Mammary epithelial cell (primary cell): ENCODE measurements at regions of chr10 and their contacts with region 1.

Region 1: DNA sequence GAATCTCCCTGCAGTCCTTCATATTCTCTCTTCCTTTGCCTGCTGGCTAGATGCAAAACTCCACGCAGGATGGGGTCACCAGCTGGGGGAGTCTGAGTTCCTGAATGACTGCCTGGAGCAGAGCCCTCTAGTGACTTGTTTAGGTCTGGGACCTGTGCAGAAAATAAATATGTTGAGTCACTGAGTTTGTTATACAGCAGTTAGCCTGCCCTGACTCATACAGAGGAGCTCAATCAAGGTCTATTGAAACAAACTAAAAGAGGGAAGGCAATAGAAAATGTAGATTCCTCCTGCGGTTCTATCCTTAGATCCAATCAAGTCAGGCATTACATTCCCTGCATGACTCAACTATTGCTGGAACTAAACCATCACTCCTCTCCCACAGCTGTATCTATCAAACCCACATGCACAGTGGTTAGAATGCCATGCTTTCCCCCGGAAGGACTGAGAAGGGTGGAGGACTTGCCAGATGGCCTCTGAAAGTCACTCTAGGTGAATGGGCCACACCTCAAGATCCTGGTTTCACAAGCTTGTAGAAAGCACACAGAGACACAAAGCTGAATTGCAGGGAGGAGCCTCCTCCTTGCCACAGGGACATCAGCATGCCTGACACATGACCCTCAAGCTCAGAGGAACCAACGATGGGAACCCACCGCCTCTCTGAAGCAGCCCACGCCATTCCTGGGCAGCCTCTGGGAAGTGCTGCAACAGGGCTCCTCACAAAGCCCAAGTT is 73.9 kb downstream of the SH3PXD2A start:
- DNase-seq: peak; percentile 99
- H3K4me3 ChIP-seq: no peak overlapping the region
- H3K27ac ChIP-seq: peak overlapping the region; percentile 90
- H3K4me1 ChIP-seq: peaks cover 77% of the 10 kb centered on the region
- H3K27me3 ChIP-seq: no peaks in the 10 kb centered on the region
- CTCF ChIP-seq: peak; percentile 66 to 68

Region 2: DNA sequence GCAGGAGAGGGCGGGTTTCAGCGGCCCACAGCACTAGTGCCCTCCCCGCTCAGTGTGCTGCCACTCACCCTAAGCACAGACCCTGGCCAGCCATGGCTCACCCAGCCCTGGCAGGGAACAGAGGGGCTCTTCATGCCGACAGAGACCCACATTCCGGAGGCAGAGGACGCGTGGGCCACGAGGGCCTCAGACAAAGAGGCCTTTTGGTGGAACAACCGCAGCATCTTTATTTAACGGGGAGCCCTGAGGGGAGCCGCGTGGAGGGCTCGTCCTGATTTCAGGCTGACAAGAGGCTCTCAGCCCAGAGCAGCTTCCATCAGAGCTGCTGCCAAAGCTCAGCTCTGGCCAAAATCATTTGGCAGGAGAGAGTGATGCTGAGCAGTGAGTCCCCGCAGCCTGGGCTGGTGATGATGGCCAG is 53.9 kb before region 1 on chr10:
- CTCF ChIA-PET with region 1: no interaction called
- dilution Hi-C with region 1: no loop called
- in situ Hi-C with region 1: no loop called
- intact Hi-C with region 1: no loop called
- DNase-seq: no peak
- H3K4me3 ChIP-seq: no peak overlapping the region
- H3K27ac ChIP-seq: no peak overlapping the region
- H3K4me1 ChIP-seq: peaks cover 9% of the 10 kb centered on the region
- H3K27me3 ChIP-seq: no peaks in the 10 kb centered on the region
- CTCF ChIP-seq: no peak

Region 3: DNA sequence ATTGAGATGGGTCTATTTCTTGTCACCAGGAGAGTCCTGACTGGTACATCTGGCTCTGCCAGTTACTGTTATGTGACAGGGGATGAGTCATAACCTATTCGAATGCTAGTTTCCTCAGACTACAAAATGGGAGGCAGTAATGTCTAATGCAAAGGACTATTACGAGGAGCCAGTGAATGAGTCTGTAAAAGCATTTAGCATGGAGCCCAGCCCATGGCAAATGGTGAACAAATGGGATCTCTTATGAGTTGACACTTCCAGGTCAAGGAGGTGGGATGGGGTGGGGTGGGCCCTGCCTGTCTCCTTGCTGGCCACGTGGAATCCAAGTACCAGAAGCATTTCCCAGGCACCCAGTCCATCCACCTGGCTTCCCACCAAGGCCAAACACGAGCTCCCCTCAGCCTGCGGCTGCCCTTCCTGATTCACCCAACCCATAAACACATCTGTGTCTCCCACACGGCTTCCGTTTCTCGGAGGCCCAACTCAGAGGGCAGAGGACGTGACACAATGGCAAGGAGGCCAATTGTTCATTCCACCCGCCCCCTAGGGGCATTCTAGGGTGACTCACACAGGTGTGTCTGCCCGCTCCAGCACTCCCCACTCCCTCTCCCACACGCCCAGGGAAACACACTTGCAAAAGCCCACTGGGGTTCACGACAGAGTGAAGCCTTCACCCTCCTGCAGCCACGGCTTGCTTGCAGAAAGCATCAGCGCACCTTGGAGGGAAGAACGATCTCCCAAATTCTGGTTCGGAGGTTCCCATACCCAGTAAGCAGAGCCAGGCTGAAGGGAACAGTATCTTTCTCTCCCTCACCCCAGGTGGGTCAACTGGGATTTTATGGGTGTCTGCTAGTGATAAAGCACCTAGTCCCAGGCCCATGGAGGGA is 35.9 kb before region 1 on chr10:
- CTCF ChIA-PET with region 1: interaction called, 4 read pairs
- dilution Hi-C with region 1: loop called (anchors 5 kb)
- in situ Hi-C with region 1: no loop called
- intact Hi-C with region 1: no loop called
- DNase-seq: peak; percentile 96
- H3K4me3 ChIP-seq: peak overlapping the region in 1 of 3 experiments; percentile 24
- H3K27ac ChIP-seq: peak overlapping the region; percentile 96
- H3K4me1 ChIP-seq: peaks cover 68% of the 10 kb centered on the region
- H3K27me3 ChIP-seq: no peaks in the 10 kb centered on the region
- CTCF ChIP-seq: no peak

Region 4: DNA sequence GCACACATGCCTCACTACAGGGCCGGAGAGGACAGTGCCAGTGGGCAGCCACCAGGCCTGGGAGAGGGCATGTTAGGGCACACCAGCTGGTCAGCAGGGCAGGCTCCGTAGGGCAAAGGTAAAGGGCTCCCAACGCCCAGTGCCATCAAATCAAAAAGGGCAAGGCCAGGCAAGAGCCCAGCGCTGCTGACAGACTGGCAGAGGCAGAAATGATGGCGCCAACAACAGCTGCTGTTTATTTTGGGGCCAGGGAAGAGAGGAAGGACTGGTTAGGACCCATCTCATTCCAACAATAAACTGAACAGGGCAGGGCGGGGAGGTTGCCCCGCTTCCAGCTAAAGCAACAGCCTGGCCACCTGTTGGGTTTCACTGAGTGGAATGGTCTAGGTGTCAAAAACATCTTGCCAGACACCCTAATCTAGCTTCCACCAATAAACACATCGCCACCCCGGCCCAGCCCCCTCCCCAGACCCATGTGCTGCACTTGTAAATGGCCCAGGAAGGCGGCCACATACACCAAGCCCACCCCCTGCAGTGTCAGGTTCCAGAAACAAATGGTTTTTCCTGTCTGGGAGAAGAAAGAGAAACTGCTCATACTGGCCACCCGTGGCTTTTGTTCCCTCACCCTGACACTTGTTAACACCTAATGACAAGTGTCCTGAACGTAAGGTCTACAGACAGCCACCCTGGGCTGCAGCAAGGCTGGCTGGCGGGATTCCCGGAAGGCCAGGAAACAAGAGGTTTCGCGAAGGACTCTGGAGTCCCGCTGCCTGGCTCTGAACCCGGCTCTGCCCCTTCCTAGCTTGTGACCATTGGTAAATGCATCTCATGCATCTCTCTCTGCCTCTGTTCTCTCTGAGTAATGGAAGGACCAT is 58.6 kb after region 1 on chr10:
- CTCF ChIA-PET with region 1: no interaction called
- dilution Hi-C with region 1: loop called (anchors 5 kb)
- in situ Hi-C with region 1: no loop called
- intact Hi-C with region 1: no loop called
- DNase-seq: no peak
- H3K4me3 ChIP-seq: no peak overlapping the region
- H3K27ac ChIP-seq: no peak overlapping the region
- H3K4me1 ChIP-seq: peaks cover 46% of the 10 kb centered on the region
- H3K27me3 ChIP-seq: no peaks in the 10 kb centered on the region
- CTCF ChIP-seq: no peak